Dorsolateral prefrontal cortex (tissue), 120 donors: ENCODE measurements at regions of chr1 and their contacts with region 1.

Region 1: GRCh38 chr1:19918057-19918456 is 5.4 kb downstream of the PLA2G2E start:
- DNase-seq: peak; percentile 64 to 91 (median 84)
- H3K4me3 ChIP-seq: no peak overlapping the region
- H3K27ac ChIP-seq: peak overlapping the region in 8 of 59 donors; percentile 26 to 70 (median 56)
- H3K27me3 ChIP-seq: peaks cover 0 to 1% (median 0%) of the 10 kb centered on the region in 45 donors
- CTCF ChIP-seq: peak; percentile 87 to 98 (median 94)

Region 2: DNA sequence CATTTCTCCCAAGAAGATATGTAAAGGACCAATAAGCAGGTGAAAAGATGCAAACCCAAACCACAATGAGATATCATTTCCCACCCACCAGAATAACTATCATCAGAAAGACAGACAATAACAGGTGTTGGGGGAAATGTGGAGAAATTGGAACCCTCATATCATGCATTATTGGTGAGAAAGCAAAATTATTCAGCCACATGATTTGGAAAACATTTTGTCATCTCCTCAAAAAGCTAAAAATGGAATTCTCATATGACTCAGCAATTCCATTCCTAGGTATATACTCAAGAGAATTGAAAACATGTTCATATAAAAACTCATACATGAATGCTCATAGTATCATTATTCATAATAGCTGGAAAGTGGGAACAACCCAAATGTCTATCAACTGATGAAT is 77.8 kb before region 1 on chr1:
- intact Hi-C with region 1: no loop called
- DNase-seq: no peak
- H3K4me3 ChIP-seq: no peak overlapping the region
- H3K27ac ChIP-seq: no peak overlapping the region
- H3K27me3 ChIP-seq: peaks cover 0 to 5% (median 0%) of the 10 kb centered on the region in 45 donors
- CTCF ChIP-seq: no peak

Region 3: GRCh38 chr1:19882111-19883071 is 35.7 kb before region 1 on chr1 and contains the start of gene OTUD3:
- intact Hi-C with region 1: loop called in 1 of 2 experiments (anchors 5 kb)
- DNase-seq: peak; percentile 83 to 96 (median 94)
- H3K4me3 ChIP-seq: peak within 1 kb of the TSS; percentile 49 to 99 (median 90)
- H3K27ac ChIP-seq: peak within 1 kb of the TSS; percentile 6 to 96 (median 89)
- H3K27me3 ChIP-seq: peaks cover 0 to 7% (median 0%) of the 10 kb centered on the region in 45 donors
- CTCF ChIP-seq: peak; percentile 91 to 100 (median 98)
- total RNA-seq, gene OTUD3: 16.6 to 72.2 (median 30.5) TPM

Region 4: GRCh38 chr1:19892628-19893168 is 25.4 kb before region 1 on chr1:
- intact Hi-C with region 1: no loop called
- DNase-seq: no peak
- H3K4me3 ChIP-seq: no peak overlapping the region
- H3K27ac ChIP-seq: peak overlapping the region in 2 of 59 donors; percentile 3 to 13
- H3K27me3 ChIP-seq: no peaks in the 10 kb centered on the region
- CTCF ChIP-seq: no peak

Region 5: GRCh38 chr1:20047096-20047495 is 129.0 kb after region 1 on chr1:
- intact Hi-C with region 1: no loop called
- DNase-seq: no peak
- H3K4me3 ChIP-seq: no peak overlapping the region
- H3K27ac ChIP-seq: no peak overlapping the region
- H3K27me3 ChIP-seq: peaks cover 0 to 12% (median 0%) of the 10 kb centered on the region in 45 donors
- CTCF ChIP-seq: no peak

Region 6: DNA sequence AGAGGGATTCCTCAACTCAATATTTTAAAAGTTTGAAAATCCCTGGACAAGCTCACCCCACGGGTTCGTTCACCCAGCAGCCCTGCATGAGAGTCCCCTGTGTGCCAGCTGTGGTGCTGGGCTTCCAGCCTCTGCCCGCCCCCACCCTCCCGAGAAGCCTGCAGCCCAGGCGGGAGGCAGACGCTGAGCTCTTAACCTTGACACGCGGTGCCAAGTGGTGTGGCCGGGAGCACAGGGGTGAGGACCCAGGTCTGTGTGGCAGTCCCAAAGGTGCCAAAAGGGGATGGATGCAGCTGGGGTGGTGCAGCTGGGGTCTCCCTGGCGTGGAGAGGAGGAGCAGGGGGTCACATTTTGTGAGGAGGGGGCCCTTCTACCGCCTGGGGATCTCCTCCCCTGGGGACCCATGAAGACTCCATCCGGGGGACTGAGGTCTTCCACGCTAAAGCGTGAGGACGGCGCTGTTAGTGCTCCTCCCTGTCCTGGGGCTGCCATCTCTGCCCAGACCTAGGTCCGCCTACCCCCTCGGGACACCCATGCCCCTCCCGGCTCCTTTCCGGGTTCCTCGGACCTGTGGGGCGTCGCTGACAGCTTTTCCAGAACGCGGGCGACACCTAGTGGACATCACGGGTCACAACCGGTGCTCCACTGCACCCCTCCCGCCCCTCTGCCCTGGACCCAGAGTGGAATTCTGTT is 234.0 kb after region 1 on chr1:
- intact Hi-C with region 1: loop called (anchors 1 to 2 kb)
- DNase-seq: peak; percentile 69 to 84 (median 76)
- H3K4me3 ChIP-seq: peak overlapping the region; percentile 8 to 68 (median 50)
- H3K27ac ChIP-seq: peak overlapping the region in 50 of 59 donors; percentile 38 to 91 (median 78)
- H3K27me3 ChIP-seq: no peaks in the 10 kb centered on the region
- CTCF ChIP-seq: peak; percentile 78 to 99 (median 95)

Region 7: DNA sequence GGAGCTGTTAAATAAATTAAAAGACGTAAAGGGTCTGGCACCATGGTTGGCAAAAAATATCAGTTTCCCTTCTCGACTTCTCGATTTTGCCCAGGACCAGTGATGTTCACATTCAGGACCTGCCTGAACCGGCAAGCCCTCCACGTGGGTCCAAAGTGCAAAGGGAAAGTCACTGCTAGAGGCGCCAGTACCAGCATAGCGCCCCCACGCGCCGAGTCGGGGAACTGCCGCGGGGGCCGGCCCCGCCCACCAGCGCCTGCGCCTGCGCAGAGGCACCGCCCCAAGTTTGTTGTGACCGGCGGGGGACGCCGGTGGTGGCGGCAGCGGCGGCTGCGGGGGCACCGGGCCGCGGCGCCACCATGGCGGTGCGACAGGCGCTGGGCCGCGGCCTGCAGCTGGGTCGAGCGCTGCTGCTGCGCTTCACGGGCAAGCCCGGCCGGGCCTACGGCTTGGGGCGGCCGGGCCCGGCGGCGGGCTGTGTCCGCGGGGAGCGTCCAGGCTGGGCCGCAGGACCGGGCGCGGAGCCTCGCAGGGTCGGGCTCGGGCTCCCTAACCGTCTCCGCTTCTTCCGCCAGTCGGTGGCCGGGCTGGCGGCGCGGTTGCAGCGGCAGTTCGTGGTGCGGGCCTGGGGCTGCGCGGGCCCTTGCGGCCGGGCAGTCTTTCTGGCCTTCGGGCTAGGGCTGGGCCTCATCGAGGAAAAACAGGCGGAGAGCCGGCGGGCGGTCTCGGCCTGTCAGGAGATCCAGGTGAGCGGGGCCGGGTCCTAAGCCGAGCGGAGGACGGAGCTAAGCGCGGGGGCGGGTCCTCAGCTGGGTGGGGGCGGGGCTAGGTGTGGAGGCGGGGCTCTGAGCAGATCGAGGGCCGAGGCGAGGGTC is 715.4 kb after region 1 on chr1 and contains the start of gene PINK1:
- intact Hi-C with region 1: loop called in 1 of 2 experiments (anchors 10 kb)
- DNase-seq: peak; percentile 59 to 91 (median 77)
- H3K4me3 ChIP-seq: peak within 1 kb of the TSS; percentile 68 to 100 (median 92)
- H3K27ac ChIP-seq: peak within 1 kb of the TSS; percentile 31 to 99 (median 91)
- H3K27me3 ChIP-seq: no peaks in the 10 kb centered on the region
- CTCF ChIP-seq: peak; percentile 73 to 99 (median 96)
- total RNA-seq, gene PINK1: 159 to 357 (median 261) TPM